Naive thymus-derived CD4-positive, alpha-beta T cell (primary cell): ENCODE measurements at regions of chr22 and their contacts with region 1.

Region 1: GRCh38 chr22:50185384-50186087 is at the start of gene TRABD:
- DNase-seq: peak; percentile 76 to 89 (median 86)
- ATAC-seq: peak; percentile 87
- H3K4me3 ChIP-seq: peak within 1 kb of the TSS; percentile 83
- H3K4me3 Mint-ChIP-seq: peak within 1 kb of the TSS; percentile 88 to 98 (median 94)
- H3K27ac ChIP-seq: peak within 1 kb of the TSS; percentile 78
- H3K27ac Mint-ChIP-seq: peak within 1 kb of the TSS; percentile 82 to 98 (median 96)
- H3K4me1 ChIP-seq: peaks cover 28 to 32% of the 10 kb centered on the region in 2 donors
- H3K4me1 Mint-ChIP-seq: peaks cover 10 to 37% (median 23%) of the 10 kb centered on the region in 7 donors
- H3K27me3 ChIP-seq: no peaks in the 10 kb centered on the region
- H3K27me3 Mint-ChIP-seq: peaks cover 0 to 6% (median 0%) of the 10 kb centered on the region in 5 donors
- total RNA-seq, gene TRABD: 106 to 157 (median 124) TPM

Region 2: DNA sequence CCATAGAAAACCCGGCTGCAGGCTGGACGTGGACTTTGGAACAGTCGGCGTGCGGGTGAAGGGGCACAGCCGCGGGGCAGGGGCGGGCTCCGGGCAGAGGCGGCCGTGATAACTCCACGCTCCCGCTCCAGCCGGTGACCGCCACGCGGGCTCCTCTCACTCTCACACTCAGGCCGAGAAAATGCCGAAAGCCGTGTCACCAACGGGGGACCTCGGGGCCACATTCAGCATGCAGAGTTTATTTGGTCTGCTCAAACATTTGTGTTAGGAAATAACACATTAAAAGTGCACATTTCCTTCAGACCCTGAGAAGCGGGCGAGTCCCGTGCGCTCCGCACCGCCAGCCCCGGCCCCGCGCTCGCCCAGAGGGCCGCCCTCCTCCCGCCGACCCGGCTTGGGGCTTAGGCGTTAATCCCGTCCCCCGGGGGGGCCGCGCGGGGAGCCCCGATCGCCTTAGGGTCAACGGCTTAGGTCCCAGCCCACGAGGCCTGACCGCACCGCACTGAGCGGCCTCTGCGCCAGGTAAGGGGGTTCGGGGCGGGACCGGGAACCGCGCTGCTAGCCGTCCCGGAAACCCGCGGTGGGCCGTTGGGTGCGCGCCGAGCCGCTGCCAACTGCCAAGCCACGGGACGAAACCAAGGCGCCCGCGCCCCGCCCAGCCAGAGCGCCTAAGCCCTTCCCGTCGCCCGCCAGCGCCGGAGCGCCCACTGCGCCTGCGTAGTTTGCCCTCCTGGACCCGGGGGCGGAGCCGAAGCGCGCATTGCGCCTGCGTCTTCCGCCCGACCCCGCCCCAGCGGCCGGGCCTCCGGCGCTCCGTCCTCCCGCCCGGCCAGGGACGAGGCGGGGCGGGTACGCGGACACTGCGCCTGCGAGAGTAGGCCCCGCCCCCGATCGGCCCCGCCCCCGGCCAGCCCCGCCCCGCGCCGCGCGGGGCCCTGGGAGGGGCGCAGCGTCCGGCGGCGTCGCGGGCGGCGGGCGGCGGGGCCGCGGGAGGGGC is 332.3 kb before region 1 on chr22 and contains the start of gene ZBED4:
- CTCF ChIA-PET with region 1: no interaction called
- POLR2A ChIA-PET with region 1: no interaction called
- intact Hi-C with region 1: loop called in 1 of 2 experiments (anchors 5 kb)
- DNase-seq: peak; percentile 90 to 100 (median 98)
- ATAC-seq: peak; percentile 95
- H3K4me3 ChIP-seq: peak within 1 kb of the TSS; percentile 68
- H3K4me3 Mint-ChIP-seq: peak within 1 kb of the TSS; percentile 90 to 99 (median 96)
- H3K27ac ChIP-seq: peak within 1 kb of the TSS; percentile 90
- H3K27ac Mint-ChIP-seq: peak within 1 kb of the TSS; percentile 86 to 97 (median 93)
- H3K4me1 ChIP-seq: peaks cover 14 to 31% of the 10 kb centered on the region in 2 donors
- H3K4me1 Mint-ChIP-seq: peaks cover 30 to 62% (median 45%) of the 10 kb centered on the region in 7 donors
- H3K27me3 ChIP-seq: no peaks in the 10 kb centered on the region
- H3K27me3 Mint-ChIP-seq: peaks cover 0 to 17% (median 0%) of the 10 kb centered on the region in 5 donors
- total RNA-seq, gene ZBED4: 13.6 to 20.1 (median 17.1) TPM

Region 3: DNA sequence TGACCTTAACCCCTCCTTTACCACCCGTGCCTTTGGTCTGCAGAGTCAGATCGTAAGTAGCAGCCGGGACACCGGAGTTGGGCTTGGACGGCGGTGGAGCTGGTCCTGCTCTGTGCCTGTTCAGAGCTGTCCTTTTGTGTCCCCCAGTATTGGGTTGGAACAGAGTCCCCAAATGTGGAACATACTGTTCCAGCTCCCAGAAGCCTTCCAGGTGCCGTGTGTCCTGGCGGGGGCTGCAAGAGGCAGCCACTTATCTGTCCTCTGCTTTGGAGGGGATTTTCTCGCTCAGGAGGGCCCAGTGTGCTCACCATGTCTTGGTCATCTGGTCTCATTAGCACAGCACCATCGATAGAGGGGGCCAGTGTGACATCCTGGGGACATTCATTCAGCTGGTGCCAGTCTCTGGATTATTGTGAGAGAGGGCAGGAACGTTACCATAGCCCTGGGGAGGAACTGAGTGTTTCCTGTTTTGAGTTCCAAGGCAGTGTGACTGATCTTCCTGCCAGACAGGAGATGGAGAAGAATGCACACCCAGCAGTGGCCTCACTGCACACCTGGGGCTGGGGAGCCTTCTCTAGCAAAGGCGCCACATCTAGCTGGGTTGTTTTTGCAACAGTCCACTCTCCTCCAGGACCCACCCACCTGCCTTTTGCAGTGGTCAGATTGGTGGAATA is 254.7 kb before region 1 on chr22:
- CTCF ChIA-PET with region 1: no interaction called
- POLR2A ChIA-PET with region 1: no interaction called
- intact Hi-C with region 1: loop called in 1 of 2 experiments (anchors 5 kb)
- DNase-seq: peak in 7 of 9 donors; percentile 37 to 55 (median 44)
- ATAC-seq: peak; percentile 40
- H3K4me3 ChIP-seq: no peak overlapping the region
- H3K4me3 Mint-ChIP-seq: peak overlapping the region; percentile 34 to 83 (median 60)
- H3K27ac ChIP-seq: peak overlapping the region; percentile 37
- H3K27ac Mint-ChIP-seq: peak overlapping the region; percentile 79 to 92 (median 87)
- H3K4me1 ChIP-seq: peaks cover 10 to 28% of the 10 kb centered on the region in 2 donors
- H3K4me1 Mint-ChIP-seq: peaks cover 18 to 47% (median 39%) of the 10 kb centered on the region in 7 donors
- H3K27me3 ChIP-seq: no peaks in the 10 kb centered on the region
- H3K27me3 Mint-ChIP-seq: no peaks in the 10 kb centered on the region

Region 4: GRCh38 chr22:50148991-50149721 is 36.4 kb before region 1 on chr22:
- CTCF ChIA-PET with region 1: interaction called, 14 read pairs
- POLR2A ChIA-PET with region 1: interaction called, 4 read pairs
- intact Hi-C with region 1: loop called in 1 of 2 experiments (anchors 1 kb)
- DNase-seq: peak; percentile 61 to 80 (median 70)
- ATAC-seq: peak; percentile 96
- H3K4me3 ChIP-seq: no peak overlapping the region
- H3K4me3 Mint-ChIP-seq: no peak overlapping the region
- H3K27ac ChIP-seq: no peak overlapping the region
- H3K27ac Mint-ChIP-seq: no peak overlapping the region
- H3K4me1 ChIP-seq: no peaks in the 10 kb centered on the region
- H3K4me1 Mint-ChIP-seq: peaks cover 0 to 4% (median 0%) of the 10 kb centered on the region in 7 donors
- H3K27me3 ChIP-seq: no peaks in the 10 kb centered on the region
- H3K27me3 Mint-ChIP-seq: peaks cover 0 to 6% (median 0%) of the 10 kb centered on the region in 5 donors

Region 5: DNA sequence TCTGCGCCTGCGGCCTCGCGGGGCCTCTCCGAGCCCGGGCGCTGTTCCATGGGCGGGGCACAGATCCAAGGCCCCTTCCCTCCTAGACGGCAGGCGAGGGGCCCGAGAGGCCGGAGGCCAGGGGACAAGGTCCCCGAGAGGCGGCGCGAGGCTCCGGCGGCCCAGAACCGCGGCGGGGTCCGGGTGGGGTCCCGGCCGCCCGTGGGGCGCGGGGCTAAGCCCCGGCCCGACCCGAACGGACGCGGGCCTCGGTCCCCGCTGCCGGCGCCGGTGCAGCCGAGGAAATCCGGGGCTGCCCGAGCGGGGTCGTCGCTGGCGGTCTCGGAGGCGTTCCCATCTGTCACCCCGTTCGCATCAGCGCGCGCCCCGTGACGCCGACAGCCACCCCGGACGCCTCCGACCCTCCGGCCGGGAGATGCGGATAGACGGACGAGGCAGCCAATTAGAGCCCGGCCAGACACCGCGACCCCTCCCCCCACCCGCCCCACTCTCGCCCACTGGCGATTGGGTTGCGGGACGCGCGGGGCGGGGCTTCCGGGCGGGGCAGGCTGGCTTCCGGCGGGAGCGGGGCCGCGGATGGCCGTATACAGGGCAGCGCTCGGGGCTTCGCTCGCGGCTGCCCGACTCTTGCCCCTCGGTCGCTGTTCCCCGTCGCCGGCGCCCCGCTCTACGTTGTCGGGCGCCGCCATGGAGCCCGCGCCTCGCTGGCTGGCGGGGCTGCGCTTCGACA is 15.1 kb after region 1 on chr22 and contains the start of gene SELENOO:
- CTCF ChIA-PET with region 1: no interaction called
- POLR2A ChIA-PET with region 1: interaction called, 16 read pairs
- intact Hi-C with region 1: loop called (anchors 1 kb)
- DNase-seq: peak; percentile 76 to 93 (median 83)
- ATAC-seq: peak; percentile 94
- H3K4me3 ChIP-seq: peak within 1 kb of the TSS; percentile 48
- H3K4me3 Mint-ChIP-seq: peak within 1 kb of the TSS; percentile 74 to 90 (median 82)
- H3K27ac ChIP-seq: peak within 1 kb of the TSS; percentile 93
- H3K27ac Mint-ChIP-seq: peak within 1 kb of the TSS in 7 of 9 donors; percentile 51 to 85 (median 76)
- H3K4me1 ChIP-seq: peaks cover 4 to 15% of the 10 kb centered on the region in 2 donors
- H3K4me1 Mint-ChIP-seq: peaks cover 19 to 33% (median 27%) of the 10 kb centered on the region in 7 donors
- H3K27me3 ChIP-seq: no peaks in the 10 kb centered on the region
- H3K27me3 Mint-ChIP-seq: no peaks in the 10 kb centered on the region
- total RNA-seq, gene SELENOO: 26.7 to 36.6 (median 32.4) TPM

Region 6: GRCh38 chr22:50244420-50245213 is 59.1 kb after region 1 on chr22 and contains the start of gene TUBGCP6:
- CTCF ChIA-PET with region 1: interaction called, 3 read pairs
- POLR2A ChIA-PET with region 1: interaction called, 4 read pairs
- intact Hi-C with region 1: loop called (anchors 1 to 2 kb)
- DNase-seq: peak; percentile 88 to 95 (median 93)
- ATAC-seq: peak; percentile 88
- H3K4me3 ChIP-seq: peak within 1 kb of the TSS; percentile 73
- H3K4me3 Mint-ChIP-seq: peak within 1 kb of the TSS; percentile 76 to 100 (median 98)
- H3K27ac ChIP-seq: peak within 1 kb of the TSS; percentile 96
- H3K27ac Mint-ChIP-seq: peak within 1 kb of the TSS; percentile 91 to 100 (median 100)
- H3K4me1 ChIP-seq: peaks cover 39 to 51% of the 10 kb centered on the region in 2 donors
- H3K4me1 Mint-ChIP-seq: peaks cover 16 to 52% (median 40%) of the 10 kb centered on the region in 7 donors
- H3K27me3 ChIP-seq: no peaks in the 10 kb centered on the region
- H3K27me3 Mint-ChIP-seq: no peaks in the 10 kb centered on the region
- total RNA-seq, gene TUBGCP6: 67.8 to 146 (median 134) TPM

Region 7: DNA sequence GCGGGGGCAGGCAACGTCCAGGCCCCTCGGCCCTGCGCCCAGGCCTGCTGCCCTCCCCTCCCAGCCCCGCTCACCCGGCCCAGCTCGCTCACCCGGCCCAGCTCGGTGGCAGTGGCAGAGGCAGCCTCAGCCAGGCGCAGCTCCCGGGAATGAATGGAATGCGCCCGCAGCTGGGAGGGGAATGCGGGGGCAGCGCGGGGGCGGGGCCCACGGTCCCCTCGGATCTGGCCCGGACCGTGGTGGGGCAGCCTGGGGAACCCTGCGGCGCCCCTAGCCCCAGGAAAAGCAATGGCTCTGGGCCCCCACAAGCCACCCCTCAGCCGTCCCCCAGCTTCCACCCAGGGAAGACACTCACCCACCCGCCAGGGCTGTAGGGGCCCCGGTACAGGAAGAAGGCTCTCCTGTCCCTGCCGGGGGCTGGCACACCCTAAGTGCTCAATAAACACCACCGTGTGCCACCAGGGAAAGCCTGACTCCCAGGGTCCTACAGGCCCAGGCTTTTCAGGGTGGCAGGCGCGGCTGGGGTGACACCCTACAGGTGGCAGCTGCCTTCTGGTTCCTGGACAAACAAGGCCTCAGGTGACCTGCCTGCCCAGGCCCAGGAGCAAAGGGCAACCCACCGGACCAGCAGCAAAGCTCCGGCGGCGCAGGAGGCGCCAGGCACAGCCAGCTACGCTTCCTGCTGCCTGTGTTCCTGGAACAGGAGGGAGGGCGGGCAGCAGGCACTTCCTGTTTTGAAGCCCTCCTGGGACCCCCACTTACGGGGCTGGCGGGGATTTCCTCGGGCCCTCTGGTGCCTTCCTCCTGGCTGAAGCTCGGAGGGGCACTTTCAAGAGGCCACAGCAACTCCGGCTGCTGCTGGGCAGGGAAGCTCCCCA is 108.1 kb after region 1 on chr22:
- CTCF ChIA-PET with region 1: no interaction called
- POLR2A ChIA-PET with region 1: no interaction called
- intact Hi-C with region 1: no loop called
- DNase-seq: no peak
- ATAC-seq: peak; percentile 24
- H3K4me3 ChIP-seq: no peak overlapping the region
- H3K4me3 Mint-ChIP-seq: peak overlapping the region in 2 of 10 donors; percentile 33 to 45
- H3K27ac ChIP-seq: no peak overlapping the region
- H3K27ac Mint-ChIP-seq: no peak overlapping the region
- H3K4me1 ChIP-seq: peaks cover 0 to 4% of the 10 kb centered on the region in 2 donors
- H3K4me1 Mint-ChIP-seq: peaks cover 0 to 8% (median 6%) of the 10 kb centered on the region in 7 donors
- H3K27me3 ChIP-seq: no peaks in the 10 kb centered on the region
- H3K27me3 Mint-ChIP-seq: peaks cover 6 to 34% (median 24%) of the 10 kb centered on the region in 5 donors

Region 8: GRCh38 chr22:50507991-50508884 is 322.7 kb after region 1 on chr22 and contains the start of gene NCAPH2:
- CTCF ChIA-PET with region 1: no interaction called
- POLR2A ChIA-PET with region 1: interaction called, 6 read pairs
- intact Hi-C with region 1: loop called in 1 of 2 experiments (anchors 2 kb)
- DNase-seq: peak; percentile 95 to 99 (median 97)
- ATAC-seq: peak; percentile 86
- H3K4me3 ChIP-seq: peak within 1 kb of the TSS; percentile 91
- H3K4me3 Mint-ChIP-seq: peak within 1 kb of the TSS; percentile 88 to 97 (median 94)
- H3K27ac ChIP-seq: peak within 1 kb of the TSS; percentile 99
- H3K27ac Mint-ChIP-seq: peak within 1 kb of the TSS; percentile 89 to 99 (median 98)
- H3K4me1 ChIP-seq: peaks cover 19 to 26% of the 10 kb centered on the region in 2 donors
- H3K4me1 Mint-ChIP-seq: peaks cover 14 to 33% (median 27%) of the 10 kb centered on the region in 7 donors
- H3K27me3 ChIP-seq: no peaks in the 10 kb centered on the region
- H3K27me3 Mint-ChIP-seq: no peaks in the 10 kb centered on the region
- total RNA-seq, gene NCAPH2: 74.3 to 135 (median 91.1) TPM